ENCODE measurements at regions of chr2 and their contacts with region 1.

Region 1: GRCh38 chr2:37529830-37530415 is 141.5 kb downstream of the CDC42EP3 start:
- DNase-seq: peak; percentile 20
- ATAC-seq: no peak
- H3K4me3 ChIP-seq: no peak overlapping the region
- H3K27ac ChIP-seq: no peak overlapping the region
- H3K4me1 ChIP-seq: peaks cover 6% of the 10 kb centered on the region
- H3K27me3 ChIP-seq: no peaks in the 10 kb centered on the region
- CTCF ChIP-seq: no peak
- POLR2A ChIP-seq: no peak
- RAD21 ChIP-seq: no peak

Region 2: GRCh38 chr2:36770542-36771287 is 759.2 kb before region 1 on chr2:
- CTCF ChIA-PET with region 1: no interaction called
- POLR2A ChIA-PET with region 1: no interaction called
- dilution Hi-C with region 1: no loop called
- in situ Hi-C with region 1: no loop called
- intact Hi-C with region 1: no loop called
- DNase-seq: peak; percentile 18
- ATAC-seq: peak; percentile 40; the same call in 1 of the 2 replicates
- H3K4me3 ChIP-seq: no peak overlapping the region
- H3K27ac ChIP-seq: no peak overlapping the region
- H3K4me1 ChIP-seq: no peaks in the 10 kb centered on the region
- H3K27me3 ChIP-seq: peaks cover 21% of the 10 kb centered on the region
- CTCF ChIP-seq: peak; percentile 57
- POLR2A ChIP-seq: no peak
- RAD21 ChIP-seq: peak; percentile 44

Region 3: DNA sequence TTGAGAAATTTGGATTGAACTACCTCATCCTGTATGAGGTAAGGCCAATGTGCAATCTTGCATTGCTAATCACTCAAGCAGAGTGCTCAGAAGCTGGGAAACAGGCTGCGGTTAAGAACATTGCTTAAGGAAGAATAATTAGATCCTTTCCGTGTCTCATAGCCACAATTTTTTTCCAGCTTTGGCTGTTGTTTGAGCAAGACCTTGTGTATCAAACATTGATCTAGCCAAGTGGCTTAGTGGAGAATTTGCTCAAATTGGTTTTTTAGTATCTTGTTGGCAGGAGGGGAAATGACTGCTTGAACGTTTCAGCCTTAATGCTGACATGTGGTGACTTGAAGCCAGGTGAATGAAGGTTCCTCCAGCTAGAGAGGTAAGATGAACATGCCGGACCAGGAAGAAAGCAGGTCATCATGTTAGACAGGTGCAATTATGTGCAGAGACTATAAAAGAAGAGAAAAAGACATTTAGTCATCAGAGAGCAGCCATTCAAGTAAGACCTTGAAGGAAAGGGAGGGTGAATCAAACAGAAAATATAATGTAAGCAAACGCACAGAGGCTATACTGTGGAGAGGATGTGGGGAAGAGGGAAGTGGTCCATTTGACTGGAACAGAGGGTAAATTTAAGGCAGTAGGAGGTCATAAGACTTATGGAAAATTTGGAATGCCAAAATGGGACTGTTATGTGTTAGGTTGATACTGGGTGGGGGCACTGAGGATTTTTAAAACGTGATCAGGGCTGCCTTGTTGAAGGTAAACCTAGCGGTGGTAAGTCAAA is 644.9 kb after region 1 on chr2:
- CTCF ChIA-PET with region 1: no interaction called
- POLR2A ChIA-PET with region 1: interaction called, 13 read pairs
- dilution Hi-C with region 1: no loop called
- in situ Hi-C with region 1: no loop called
- intact Hi-C with region 1: no loop called
- DNase-seq: peak; percentile 98
- ATAC-seq: peak; percentile 64
- H3K4me3 ChIP-seq: no peak overlapping the region
- H3K27ac ChIP-seq: peak overlapping the region; percentile 99
- H3K4me1 ChIP-seq: peaks cover 25% of the 10 kb centered on the region
- H3K27me3 ChIP-seq: no peaks in the 10 kb centered on the region
- CTCF ChIP-seq: no peak
- POLR2A ChIP-seq: no peak
- RAD21 ChIP-seq: no peak